ENCODE measurements at regions of chr16 and their contacts with region 1.

Region 1: GRCh38 chr16:81946206-81946605 is 65.1 kb downstream of the SDR42E1 start:
- DNase-seq: no peak

Region 2: DNA sequence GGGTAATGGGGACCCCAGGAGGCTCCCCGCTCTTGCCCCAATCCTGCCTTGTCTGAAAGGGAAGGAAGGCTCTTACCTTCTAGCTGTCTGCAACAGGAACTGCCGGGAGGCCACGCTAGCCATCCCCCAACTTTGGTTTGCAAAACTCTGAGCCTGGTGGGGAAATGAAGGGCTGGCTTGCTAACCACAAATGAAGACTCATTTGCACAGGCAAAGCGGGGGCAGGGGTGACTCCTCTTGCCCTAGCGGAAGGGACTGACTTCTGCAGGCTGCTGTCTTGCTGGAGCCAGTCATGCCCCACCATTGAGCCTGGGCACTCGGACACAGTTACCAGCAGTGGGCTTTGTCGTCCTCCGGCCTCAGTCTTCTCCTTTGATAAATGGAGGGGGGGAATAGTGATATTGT is 114.5 kb before region 1 on chr16:
- intact Hi-C with region 1: no loop called
- DNase-seq: peak; percentile 92

Region 3: DNA sequence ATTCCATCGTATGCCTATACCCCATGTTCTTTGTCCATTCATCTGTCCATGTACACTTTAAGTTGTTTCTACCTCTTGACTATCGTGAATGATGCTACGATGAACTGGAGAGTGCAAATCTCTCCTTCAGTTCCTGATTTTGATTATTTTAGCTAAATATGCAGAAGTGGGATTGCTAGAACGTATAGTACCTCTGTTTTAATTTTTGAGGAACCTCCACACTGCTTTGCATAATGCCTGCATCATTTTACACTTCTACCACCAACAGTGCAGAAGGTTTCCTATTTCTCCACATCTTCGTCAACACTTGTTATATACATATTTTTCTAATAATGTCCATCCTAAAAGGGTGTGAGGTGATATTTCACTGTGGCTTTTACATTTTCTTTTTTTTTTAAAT is 21.2 kb after region 1 on chr16:
- intact Hi-C with region 1: loop called in 1 of 2 experiments (anchors 1 kb)
- DNase-seq: no peak